Aorta (tissue), 5 donors: ENCODE measurements at regions of chr9 and their contacts with region 1.

Region 1: DNA sequence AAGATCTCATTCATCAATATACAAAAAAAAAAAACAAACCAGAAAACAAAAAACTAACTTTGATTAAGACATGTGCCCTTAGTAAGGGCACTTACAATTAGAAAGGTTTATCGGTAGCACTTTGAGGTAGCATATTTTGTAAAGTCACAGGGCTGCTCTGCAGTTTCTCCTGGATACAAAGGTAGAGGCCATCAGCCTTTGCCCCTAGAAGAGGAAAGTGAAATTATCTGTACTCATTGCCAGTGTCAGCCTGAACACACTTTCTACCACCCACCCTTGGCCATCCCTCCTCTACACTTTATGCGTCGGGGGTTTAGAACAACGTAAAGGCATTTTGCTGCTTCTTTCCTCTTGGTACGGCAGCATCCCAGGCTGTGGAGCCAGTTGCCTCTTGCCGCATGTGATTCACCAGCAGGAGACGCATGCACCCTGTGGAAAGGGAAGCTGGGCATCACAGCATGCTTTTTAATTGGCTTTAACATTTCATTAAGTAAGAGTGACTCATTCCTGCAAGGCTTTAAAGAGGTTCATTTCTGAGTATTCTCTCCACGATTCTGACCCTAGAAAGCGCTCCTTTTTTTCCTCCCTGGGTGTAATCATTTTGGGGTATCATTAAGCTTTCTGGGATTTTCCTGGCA is 84.6 kb downstream of the CEMIP2 start:
- DNase-seq: peak in 1 of 2 donors; percentile 65
- ATAC-seq: no peak
- H3K4me3 ChIP-seq: no peak overlapping the region
- H3K27ac ChIP-seq: no peak overlapping the region
- H3K4me1 ChIP-seq: peaks cover 0 to 6% of the 10 kb centered on the region in 2 donors
- H3K27me3 ChIP-seq: no peaks in the 10 kb centered on the region

Region 2: DNA sequence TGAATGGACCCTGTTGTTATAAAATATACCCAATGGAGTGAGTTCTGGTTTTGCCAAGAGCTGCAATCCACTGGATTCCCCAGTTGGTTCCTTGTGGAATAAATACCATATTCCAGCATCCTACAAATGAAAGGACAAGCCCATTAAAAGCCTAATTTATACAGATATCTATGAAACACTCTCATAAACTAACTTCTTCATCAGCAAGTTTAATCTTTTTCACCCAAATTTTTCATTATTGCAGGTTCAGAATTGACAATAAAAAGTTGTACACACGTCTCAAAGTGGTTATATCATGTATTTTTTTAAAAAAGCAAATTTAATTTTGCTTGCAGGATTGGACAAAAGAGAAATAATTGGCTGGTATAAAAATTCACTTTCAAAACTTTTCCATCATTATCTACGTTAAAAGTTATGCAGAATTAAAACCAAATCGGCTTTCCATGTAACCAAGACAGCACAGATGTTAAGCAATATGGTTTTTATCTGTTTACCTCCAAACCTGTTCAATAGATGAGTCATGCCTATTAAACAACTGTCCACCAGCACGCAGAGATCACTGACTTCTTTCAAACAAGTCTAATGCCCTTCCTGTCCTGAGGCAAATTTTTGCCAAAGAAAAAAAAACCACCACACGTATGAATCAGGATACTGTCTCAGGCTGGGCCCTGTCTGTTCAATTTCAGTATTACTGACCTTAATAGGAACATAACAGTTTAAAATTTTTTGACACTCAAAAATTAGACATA is 42.0 kb after region 1 on chr9:
- intact Hi-C with region 1: no loop called
- DNase-seq: no peak
- ATAC-seq: no peak
- H3K4me3 ChIP-seq: no peak overlapping the region
- H3K27ac ChIP-seq: no peak overlapping the region
- H3K4me1 ChIP-seq: no peaks in the 10 kb centered on the region
- H3K27me3 ChIP-seq: no peaks in the 10 kb centered on the region

Region 3: GRCh38 chr9:71748280-71748743 is 64.6 kb after region 1 on chr9:
- intact Hi-C with region 1: loop called in 1 of 2 experiments (anchors 10 kb)
- DNase-seq: no peak
- ATAC-seq: no peak
- H3K4me3 ChIP-seq: no peak overlapping the region
- H3K27ac ChIP-seq: no peak overlapping the region
- H3K4me1 ChIP-seq: no peaks in the 10 kb centered on the region
- H3K27me3 ChIP-seq: no peaks in the 10 kb centered on the region